Endothelial cell of umbilical vein (primary cell): ENCODE measurements at regions of chr20 and their contacts with region 1.

Region 1: DNA sequence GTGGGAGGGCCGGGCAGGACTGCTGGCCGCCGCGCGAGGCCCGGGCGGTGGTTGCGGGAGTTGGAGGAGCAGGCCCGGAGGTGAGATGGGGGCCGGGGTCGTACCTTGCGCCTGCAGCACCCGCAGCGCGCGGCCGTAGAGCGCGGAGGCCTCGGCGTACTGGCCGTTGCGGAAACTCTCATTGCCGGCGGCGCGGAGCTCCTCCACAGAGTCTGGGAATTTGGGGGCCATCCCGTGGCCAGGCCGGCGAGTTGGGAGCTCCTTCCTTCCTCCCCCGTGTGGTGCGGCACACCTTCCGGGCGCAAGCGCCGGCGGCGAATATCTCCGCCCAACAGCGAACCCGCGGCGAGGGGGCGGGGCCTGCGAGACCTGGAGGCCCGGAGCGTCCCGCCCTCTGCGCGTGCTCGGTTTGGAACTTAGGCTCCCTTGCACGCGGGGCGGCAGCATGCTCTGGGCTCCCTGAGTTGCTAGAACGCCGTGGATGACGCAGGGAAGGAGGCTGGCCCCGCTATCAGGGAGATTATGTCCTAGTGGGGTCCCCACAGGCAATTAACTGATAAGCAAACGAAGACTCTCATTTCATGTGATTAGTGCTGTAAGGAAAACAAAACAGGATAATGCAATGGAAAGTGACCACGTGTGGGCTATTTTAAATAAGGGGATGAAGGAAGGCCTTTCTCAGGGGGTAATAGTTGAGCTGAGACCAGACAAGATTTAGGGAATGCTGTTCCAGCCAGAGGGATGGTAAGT is at the start of gene TOMM34:
- DNase-seq: peak; percentile 90
- H3K4me3 ChIP-seq: peak within 1 kb of the TSS; percentile 90 to 96 (median 95)
- H3K27ac ChIP-seq: peak within 1 kb of the TSS; percentile 68
- H3K4me1 ChIP-seq: peaks cover 28% of the 10 kb centered on the region
- H3K27me3 ChIP-seq: no peaks in the 10 kb centered on the region
- CTCF ChIP-seq: no peak
- POLR2A ChIP-seq: peak; percentile 85
- total RNA-seq, gene TOMM34: 37.0 and 44.2 TPM in 2 replicates

Region 2: GRCh38 chr20:44909872-44910689 is 50.2 kb before region 1 on chr20 and contains the start of gene PABPC1L:
- CTCF ChIA-PET with region 1: no interaction called
- POLR2A ChIA-PET with region 1: no interaction called
- dilution Hi-C with region 1: no loop called
- intact Hi-C with region 1: loop called (anchors 2 kb)
- DNase-seq: no peak
- H3K4me3 ChIP-seq: peak within 1 kb of the TSS; percentile 43 to 62 (median 51)
- H3K27ac ChIP-seq: no peak within 1 kb of the TSS
- H3K4me1 ChIP-seq: peaks cover 12% of the 10 kb centered on the region
- H3K27me3 ChIP-seq: no peaks in the 10 kb centered on the region
- CTCF ChIP-seq: no peak
- POLR2A ChIP-seq: peak; percentile 47
- total RNA-seq, gene PABPC1L: 7.5 and 7.8 TPM in 2 replicates

Region 3: GRCh38 chr20:45350217-45350616 is 389.9 kb after region 1 on chr20:
- CTCF ChIA-PET with region 1: no interaction called
- POLR2A ChIA-PET with region 1: no interaction called
- dilution Hi-C with region 1: no loop called
- intact Hi-C with region 1: no loop called
- DNase-seq: no peak
- H3K4me3 ChIP-seq: no peak overlapping the region
- H3K27ac ChIP-seq: no peak overlapping the region
- H3K4me1 ChIP-seq: peaks cover 29% of the 10 kb centered on the region
- H3K27me3 ChIP-seq: no peaks in the 10 kb centered on the region
- CTCF ChIP-seq: no peak
- POLR2A ChIP-seq: no peak